Transverse colon (tissue), 4 donors: ENCODE measurements at regions of chr3 and their contacts with region 1.

Region 1: DNA sequence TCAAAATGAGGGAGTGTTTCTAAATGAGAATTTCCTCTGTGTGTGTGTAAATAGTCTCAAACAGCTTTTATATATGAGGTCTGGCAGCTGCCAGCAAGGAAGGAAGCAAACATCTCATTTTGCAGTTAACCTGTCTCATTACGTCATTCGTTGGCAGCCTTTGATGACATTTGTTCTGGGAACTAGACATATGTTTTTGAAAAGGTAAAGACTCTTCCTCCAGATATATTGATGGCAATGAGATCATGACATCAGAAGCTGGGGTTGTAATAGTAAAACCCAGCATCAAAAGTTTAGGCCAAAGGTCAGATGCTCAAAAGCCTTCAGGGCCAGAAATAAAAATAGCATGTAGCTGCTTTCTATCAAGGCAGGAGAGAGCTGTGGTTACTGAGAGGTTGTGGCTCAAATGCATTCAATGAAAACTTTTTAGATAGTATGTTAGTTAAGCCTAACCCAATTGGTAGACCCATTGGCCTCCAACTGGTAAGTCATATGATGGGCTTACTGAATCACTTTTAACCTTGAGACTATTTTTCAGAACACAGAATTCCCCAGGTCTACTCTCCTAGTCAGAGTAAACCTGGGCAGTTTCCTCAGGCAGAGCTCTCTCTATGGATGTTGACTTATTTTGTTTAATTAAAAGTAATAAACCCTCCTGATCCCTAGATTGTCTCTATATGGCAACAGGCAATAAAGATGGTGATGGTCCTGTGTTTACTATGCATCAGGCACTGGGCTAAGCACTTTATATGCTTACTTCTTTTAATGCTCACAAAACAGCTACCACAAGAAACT is 386.5 kb upstream of the CFAP20DC start:
- DNase-seq: no peak
- H3K4me3 ChIP-seq: no peak overlapping the region
- H3K27ac ChIP-seq: no peak overlapping the region
- H3K4me1 ChIP-seq: peaks cover 0 to 9% (median 0%) of the 10 kb centered on the region in 4 donors
- H3K27me3 ChIP-seq: no peaks in the 10 kb centered on the region
- CTCF ChIP-seq: no peak
- EP300 ChIP-seq: no peak
- POLR2A ChIP-seq: no peak

Region 2: GRCh38 chr3:58214484-58215316 is 1221.7 kb before region 1 on chr3:
- in situ Hi-C with region 1: no loop called
- intact Hi-C with region 1: no loop called
- DNase-seq: peak; percentile 24
- H3K4me3 ChIP-seq: no peak overlapping the region
- H3K27ac ChIP-seq: peak overlapping the region in 1 of 4 donors; percentile 12
- H3K4me1 ChIP-seq: peaks cover 0 to 11% (median 4%) of the 10 kb centered on the region in 4 donors
- H3K27me3 ChIP-seq: no peaks in the 10 kb centered on the region
- CTCF ChIP-seq: peak in 1 of 5 experiments; percentile 3
- EP300 ChIP-seq: no peak
- POLR2A ChIP-seq: no peak

Region 3: DNA sequence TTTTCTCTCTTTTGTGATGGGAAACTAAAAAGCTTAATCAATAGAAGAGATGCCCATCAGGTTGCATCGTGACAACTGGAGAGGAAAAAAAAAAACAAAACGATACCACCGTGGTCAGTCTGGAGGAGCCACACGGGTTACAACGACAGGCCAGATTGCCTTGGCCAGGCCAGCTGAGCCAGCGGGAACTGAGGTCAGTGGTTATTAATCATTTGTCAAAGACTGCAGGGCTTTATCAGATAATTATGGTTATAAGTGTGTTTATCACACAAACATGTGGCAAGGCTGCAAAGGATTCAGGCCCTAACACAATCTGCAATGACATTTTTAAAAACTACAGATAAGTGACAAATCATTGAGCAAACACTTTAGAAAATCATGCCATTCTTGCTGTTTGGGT is 634.8 kb before region 1 on chr3:
- in situ Hi-C with region 1: no loop called
- intact Hi-C with region 1: loop called (anchors 5 kb)
- DNase-seq: no peak
- H3K4me3 ChIP-seq: no peak overlapping the region
- H3K27ac ChIP-seq: no peak overlapping the region
- H3K4me1 ChIP-seq: peaks cover 0 to 2% (median 0%) of the 10 kb centered on the region in 4 donors
- H3K27me3 ChIP-seq: no peaks in the 10 kb centered on the region
- CTCF ChIP-seq: no peak
- EP300 ChIP-seq: no peak
- POLR2A ChIP-seq: no peak

Region 4: DNA sequence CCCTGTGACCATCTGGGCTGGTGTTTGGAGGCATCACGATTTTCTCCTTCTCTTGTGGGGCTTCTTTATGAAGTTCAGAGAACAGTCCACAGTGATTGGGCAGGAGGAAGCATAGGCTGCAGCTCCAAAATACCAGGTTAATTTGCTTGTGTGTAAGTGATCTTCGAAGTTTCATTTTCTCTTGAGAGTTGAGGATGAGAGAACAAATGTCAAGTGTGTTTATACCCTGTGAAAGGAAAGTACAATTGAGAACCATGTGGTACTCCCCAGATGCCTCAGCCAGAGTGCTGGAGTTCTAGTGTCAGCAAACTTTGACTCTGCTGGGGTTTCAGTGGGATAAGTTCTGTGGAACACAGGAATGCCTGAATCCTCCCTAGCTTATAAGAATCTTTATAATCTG is 29.4 kb before region 1 on chr3:
- in situ Hi-C with region 1: no loop called
- intact Hi-C with region 1: no loop called
- DNase-seq: no peak
- H3K4me3 ChIP-seq: no peak overlapping the region
- H3K27ac ChIP-seq: peak overlapping the region in 1 of 4 donors; percentile 69
- H3K4me1 ChIP-seq: peaks cover 4 to 21% (median 13%) of the 10 kb centered on the region in 4 donors
- H3K27me3 ChIP-seq: no peaks in the 10 kb centered on the region
- CTCF ChIP-seq: no peak
- EP300 ChIP-seq: no peak
- POLR2A ChIP-seq: no peak

Region 5: DNA sequence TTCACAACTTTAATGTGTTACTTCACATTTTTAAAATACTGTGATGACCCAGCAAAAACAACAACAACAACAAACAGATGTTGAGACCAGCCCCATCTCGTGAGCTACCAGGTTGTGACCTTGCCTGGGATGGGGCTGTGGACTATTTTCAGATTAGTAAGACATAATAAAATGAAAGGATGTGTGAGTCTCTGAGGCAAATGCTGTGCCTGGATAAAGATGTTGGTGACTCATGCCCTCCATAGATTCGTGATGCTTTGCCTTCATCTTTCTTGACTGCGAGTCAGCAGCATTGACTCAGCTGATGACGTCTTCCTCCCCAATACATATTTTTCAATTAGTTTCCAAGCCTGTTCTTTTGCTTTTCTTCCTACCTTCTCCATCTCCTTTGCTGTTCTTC is 66.4 kb after region 1 on chr3:
- in situ Hi-C with region 1: no loop called
- intact Hi-C with region 1: no loop called
- DNase-seq: no peak
- H3K4me3 ChIP-seq: no peak overlapping the region
- H3K27ac ChIP-seq: no peak overlapping the region
- H3K4me1 ChIP-seq: no peaks in the 10 kb centered on the region
- H3K27me3 ChIP-seq: no peaks in the 10 kb centered on the region
- CTCF ChIP-seq: no peak
- EP300 ChIP-seq: no peak
- POLR2A ChIP-seq: no peak